HepG2 (cell line): ENCODE measurements at regions of chr21 and their contacts with region 1.

Region 1: DNA sequence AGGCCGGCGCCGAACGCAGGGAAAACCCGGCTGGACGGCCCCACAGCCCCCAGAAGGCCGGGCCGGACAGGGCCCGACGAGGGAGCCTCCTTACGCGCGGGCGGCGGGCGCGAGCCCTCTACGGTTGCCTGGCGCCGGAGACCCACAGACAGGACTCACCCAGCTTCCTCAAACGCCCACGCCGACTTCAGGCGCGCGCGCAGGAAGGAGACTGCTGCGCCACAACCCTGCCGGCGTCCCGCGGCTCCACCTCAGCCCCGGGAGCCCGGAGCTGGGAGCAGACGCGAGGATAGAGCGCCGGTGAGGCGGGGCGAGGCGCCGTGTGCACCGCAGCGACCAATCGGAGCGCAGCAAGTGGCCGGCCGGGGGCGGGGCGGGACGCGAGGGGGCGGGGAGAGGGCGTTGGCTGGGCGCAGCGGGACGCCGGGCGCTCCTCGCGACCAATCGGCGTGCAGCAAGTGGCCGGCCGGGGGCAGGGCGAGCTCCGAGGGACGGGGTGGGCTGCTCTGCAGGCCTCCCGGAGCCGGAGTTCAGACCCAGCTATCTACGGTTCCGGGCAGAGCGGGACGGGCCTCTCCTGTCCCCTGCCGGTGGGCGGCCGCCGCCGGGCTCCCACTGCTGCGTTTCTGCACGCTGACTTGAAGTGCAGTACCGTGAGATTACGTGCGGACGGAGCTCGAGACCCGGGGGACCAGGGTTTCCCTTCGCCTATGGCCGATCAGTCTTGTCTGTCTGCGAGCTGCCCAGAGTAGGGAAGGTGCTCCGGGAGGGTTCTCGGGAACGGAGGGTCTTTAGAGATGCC is at the start of gene TMEM50B:
- DNase-seq: peak; percentile 90
- ATAC-seq: peak; percentile 95
- H3K4me3 ChIP-seq: peak within 1 kb of the TSS; percentile 72 to 91 (median 85)
- H3K27ac ChIP-seq: peak within 1 kb of the TSS; percentile 92
- H3K4me1 ChIP-seq: peaks cover 23% of the 10 kb centered on the region
- H3K27me3 ChIP-seq: no peaks in the 10 kb centered on the region; a peak in 1 of 5 replicates
- CTCF ChIP-seq: peak; percentile 78
- EP300 ChIP-seq: 0 out of 4 replicates have a peak, but pooled peaks of 1 of the 2 experiments have one; percentile 14
- POLR2A ChIP-seq: peak; percentile 89 to 90
- RAD21 ChIP-seq: peak; percentile 83
- total RNA-seq, gene TMEM50B: 13.9 and 29.9 TPM in 2 replicates

Region 2: DNA sequence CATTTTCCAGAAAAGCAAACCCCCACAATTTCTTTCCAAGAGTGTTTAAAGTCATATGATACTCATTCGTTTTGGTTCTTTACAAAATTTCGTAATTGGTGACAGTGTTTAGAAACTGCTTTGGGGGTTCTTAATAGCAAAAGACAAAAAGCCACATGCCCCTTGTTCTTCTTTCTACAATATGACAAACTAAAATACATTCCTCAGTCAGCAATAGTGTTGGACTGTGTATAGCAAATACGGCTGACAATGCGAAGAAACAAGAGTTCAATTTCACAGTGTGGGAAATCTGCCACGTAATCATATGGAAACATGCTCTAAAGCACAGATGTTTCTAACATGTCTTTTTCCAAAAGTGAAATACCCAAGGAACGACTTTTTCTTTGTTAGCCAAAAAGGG is 162.7 kb before region 1 on chr21:
- CTCF ChIA-PET with region 1: no interaction called
- POLR2A ChIA-PET with region 1: no interaction called
- in situ Hi-C with region 1: no loop called
- intact Hi-C with region 1: no loop called
- DNase-seq: no peak
- ATAC-seq: no peak
- H3K4me3 ChIP-seq: no peak overlapping the region
- H3K27ac ChIP-seq: no peak overlapping the region
- H3K4me1 ChIP-seq: no peaks in the 10 kb centered on the region
- H3K27me3 ChIP-seq: peaks cover 0 to 13% of the 10 kb centered on the region in 2 experiments; a peak in 1 of 5 replicates
- CTCF ChIP-seq: no peak
- EP300 ChIP-seq: no peak
- POLR2A ChIP-seq: no peak
- RAD21 ChIP-seq: no peak

Region 3: GRCh38 chr21:33491373-33492102 is 11.7 kb after region 1 on chr21 and contains the start of gene DNAJC28:
- CTCF ChIA-PET with region 1: no interaction called
- POLR2A ChIA-PET with region 1: interaction called, 96 read pairs
- in situ Hi-C with region 1: no loop called
- intact Hi-C with region 1: no loop called
- DNase-seq: peak; percentile 87
- ATAC-seq: peak; percentile 96
- H3K4me3 ChIP-seq: peak within 1 kb of the TSS; percentile 78 to 89 (median 81)
- H3K27ac ChIP-seq: peak within 1 kb of the TSS; percentile 56
- H3K4me1 ChIP-seq: peaks cover 26% of the 10 kb centered on the region
- H3K27me3 ChIP-seq: no peaks in the 10 kb centered on the region; a peak in 1 of 5 replicates
- CTCF ChIP-seq: no peak
- EP300 ChIP-seq: no peak
- POLR2A ChIP-seq: peak; percentile 35 to 83; a peak in 3 of 4 replicates
- RAD21 ChIP-seq: no peak
- total RNA-seq, gene DNAJC28: 2.5 and 3.3 TPM in 2 replicates

Region 4: GRCh38 chr21:33588485-33589335 is 108.8 kb after region 1 on chr21 and contains the start of gene DONSON:
- CTCF ChIA-PET with region 1: no interaction called
- POLR2A ChIA-PET with region 1: interaction called, 17 read pairs
- in situ Hi-C with region 1: no loop called
- intact Hi-C with region 1: no loop called
- DNase-seq: peak; percentile 89
- ATAC-seq: peak; percentile 97
- H3K4me3 ChIP-seq: peak within 1 kb of the TSS; percentile 96 to 97 (median 97)
- H3K27ac ChIP-seq: peak within 1 kb of the TSS; percentile 89
- H3K4me1 ChIP-seq: peaks cover 35% of the 10 kb centered on the region
- H3K27me3 ChIP-seq: no peaks in the 10 kb centered on the region; a peak in 1 of 5 replicates
- CTCF ChIP-seq: no peak
- EP300 ChIP-seq: 0 out of 4 replicates have a peak, but pooled peaks of 1 of the 2 experiments have one; percentile 30
- POLR2A ChIP-seq: peak; percentile 70 to 82
- RAD21 ChIP-seq: peak; percentile 47; the same call in 1 of the 2 replicates
- total RNA-seq, gene DONSON: 60.8 and 63.6 TPM in 2 replicates